Activated CD4-positive, alpha-beta T cell treated with anti-CD3 and anti-CD28 coated beads for 36 hours (primary cell): ENCODE measurements at regions of chr4 and their contacts with region 1.

Region 1: GRCh38 chr4:6327041-6327917 is 57.6 kb downstream of the WFS1 start:
- DNase-seq: peak; percentile 88
- ATAC-seq: peak; percentile 90
- H3K4me3 Mint-ChIP-seq: no peak overlapping the region
- H3K27ac Mint-ChIP-seq: no peak overlapping the region
- H3K4me1 Mint-ChIP-seq: no peaks in the 10 kb centered on the region
- H3K27me3 Mint-ChIP-seq: peaks cover 14% of the 10 kb centered on the region

Region 2: DNA sequence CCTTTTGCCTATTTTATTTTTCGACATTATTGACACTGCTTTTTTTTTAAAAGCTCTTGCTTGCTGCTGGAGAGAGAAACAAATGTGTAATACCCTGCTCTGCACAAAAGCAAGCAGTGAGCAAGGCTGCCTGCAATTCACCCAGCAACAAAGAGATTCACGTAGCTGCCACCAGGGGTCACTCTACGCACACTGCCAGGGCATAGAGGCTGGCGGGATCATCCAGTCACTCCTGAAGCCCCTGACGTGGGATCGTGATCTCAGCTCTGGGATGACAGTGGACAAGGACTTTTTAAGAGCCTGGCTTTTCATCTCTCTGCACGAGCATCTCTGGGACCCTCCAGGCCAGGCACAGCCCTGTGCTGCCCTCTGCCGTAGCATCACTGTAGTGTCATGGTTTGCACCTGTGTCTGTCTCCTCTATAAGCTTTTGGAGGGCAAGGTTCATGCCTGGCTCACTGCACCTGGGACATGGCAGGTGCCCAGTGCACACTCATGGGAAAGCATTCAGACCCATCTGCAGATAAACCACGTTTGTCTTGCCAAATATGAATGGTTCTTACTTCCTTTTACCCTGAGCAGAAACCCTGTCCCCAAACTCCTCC is 328.8 kb before region 1 on chr4:
- CTCF ChIA-PET with region 1: interaction called, 5 read pairs
- POLR2A ChIA-PET with region 1: no interaction called
- intact Hi-C with region 1: loop called (anchors 1 to 2 kb)
- DNase-seq: peak; percentile 66
- ATAC-seq: peak; percentile 44
- H3K4me3 Mint-ChIP-seq: no peak overlapping the region
- H3K27ac Mint-ChIP-seq: no peak overlapping the region
- H3K4me1 Mint-ChIP-seq: peaks cover 2% of the 10 kb centered on the region
- H3K27me3 Mint-ChIP-seq: peaks cover 13% of the 10 kb centered on the region

Region 3: DNA sequence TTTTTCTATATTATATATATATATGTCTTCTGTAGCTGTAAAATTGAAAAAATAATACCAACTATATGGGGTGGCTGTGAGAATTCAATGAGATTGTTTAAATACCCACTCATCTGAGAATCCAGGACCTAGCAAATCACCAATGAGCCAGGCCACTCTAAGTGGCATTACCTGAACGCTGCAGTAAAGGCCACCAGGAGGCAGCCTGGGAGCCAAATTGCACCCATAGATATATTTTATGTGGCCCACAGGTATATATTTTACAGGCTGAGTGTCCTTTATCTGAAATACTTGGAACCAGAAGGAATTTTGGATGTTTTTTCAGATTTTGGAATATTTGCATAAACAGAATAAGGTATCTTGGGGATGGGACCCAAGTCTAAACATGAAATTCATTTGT is 250.9 kb before region 1 on chr4:
- CTCF ChIA-PET with region 1: no interaction called
- POLR2A ChIA-PET with region 1: no interaction called
- intact Hi-C with region 1: loop called in 1 of 2 experiments (anchors 5 kb)
- DNase-seq: peak; percentile 25
- ATAC-seq: no peak
- H3K4me3 Mint-ChIP-seq: no peak overlapping the region
- H3K27ac Mint-ChIP-seq: no peak overlapping the region
- H3K4me1 Mint-ChIP-seq: no peaks in the 10 kb centered on the region
- H3K27me3 Mint-ChIP-seq: no peaks in the 10 kb centered on the region

Region 4: DNA sequence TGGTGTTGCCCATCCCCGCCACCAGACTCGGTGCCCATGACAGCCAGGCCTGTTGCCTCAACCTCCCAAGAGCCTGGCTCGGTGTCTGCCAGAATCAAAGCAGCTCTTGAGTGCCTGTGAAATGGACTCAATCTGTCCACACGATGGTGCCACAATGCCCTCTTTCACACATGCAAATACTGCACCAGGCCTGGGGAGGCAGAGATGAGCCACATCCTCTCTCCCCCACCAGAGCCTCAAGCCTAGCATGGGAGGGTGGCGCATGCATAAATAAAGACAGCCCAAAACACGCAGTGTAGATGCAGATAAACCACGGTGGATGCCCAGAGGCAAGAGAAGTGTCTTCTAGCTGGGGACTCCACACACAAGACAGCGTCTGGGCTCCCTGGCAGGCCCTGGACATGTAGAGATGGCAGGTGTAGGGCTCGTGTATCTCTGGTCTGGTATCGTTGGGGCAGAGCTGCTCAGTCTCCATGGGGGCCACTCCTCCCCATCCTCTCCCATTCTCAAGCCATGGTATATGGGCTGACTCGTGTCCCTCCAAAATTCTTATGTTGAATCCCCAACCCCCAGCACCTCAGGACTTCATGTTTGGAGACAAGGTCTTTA is 192.6 kb before region 1 on chr4:
- CTCF ChIA-PET with region 1: no interaction called
- POLR2A ChIA-PET with region 1: interaction called, 3 read pairs
- intact Hi-C with region 1: loop called in 1 of 2 experiments (anchors 5 kb)
- DNase-seq: peak; percentile 54
- ATAC-seq: peak; percentile 90
- H3K4me3 Mint-ChIP-seq: no peak overlapping the region
- H3K27ac Mint-ChIP-seq: no peak overlapping the region
- H3K4me1 Mint-ChIP-seq: no peaks in the 10 kb centered on the region
- H3K27me3 Mint-ChIP-seq: no peaks in the 10 kb centered on the region

Region 5: DNA sequence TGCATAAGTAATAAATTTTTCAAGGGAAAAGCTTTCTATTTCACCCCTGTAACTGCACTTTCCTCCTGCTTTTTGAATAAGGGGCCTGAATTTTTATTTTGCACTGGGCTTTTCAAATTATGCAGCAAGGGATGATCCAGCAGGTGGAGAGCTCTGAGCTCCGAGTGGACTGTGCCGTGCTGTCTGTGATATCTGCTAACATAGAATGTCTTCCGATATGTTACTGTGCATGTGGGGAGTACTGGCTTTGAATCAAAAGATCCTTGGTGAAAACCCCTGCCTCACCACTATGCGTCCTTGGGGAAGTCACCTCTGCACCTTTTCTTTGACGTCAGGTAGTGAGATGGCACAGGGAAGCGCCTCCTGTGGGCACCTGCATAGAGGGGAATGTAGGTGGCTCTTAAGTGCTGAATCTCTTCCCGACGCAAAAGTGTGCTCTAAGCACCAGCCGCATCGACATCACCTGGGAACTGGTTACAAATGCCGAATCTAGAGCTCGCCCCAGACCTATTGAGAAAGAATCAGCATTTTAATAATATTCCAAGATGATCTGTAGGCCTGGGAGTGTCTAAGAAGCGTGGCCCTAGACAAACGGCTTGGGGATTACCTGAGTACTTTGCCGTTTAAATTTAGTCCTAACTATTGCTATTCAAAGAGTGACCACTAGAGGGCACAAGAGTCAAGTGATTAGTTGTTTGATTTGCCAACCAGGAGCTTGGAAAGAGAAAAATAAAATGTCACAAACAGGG is 76.9 kb before region 1 on chr4:
- CTCF ChIA-PET with region 1: interaction called, 157 read pairs
- POLR2A ChIA-PET with region 1: no interaction called
- intact Hi-C with region 1: loop called (anchors 1 kb)
- DNase-seq: no peak
- ATAC-seq: peak; percentile 47
- H3K4me3 Mint-ChIP-seq: no peak overlapping the region
- H3K27ac Mint-ChIP-seq: no peak overlapping the region
- H3K4me1 Mint-ChIP-seq: no peaks in the 10 kb centered on the region
- H3K27me3 Mint-ChIP-seq: peaks cover 30% of the 10 kb centered on the region

Region 6: GRCh38 chr4:6264225-6264540 is 63.1 kb before region 1 on chr4:
- CTCF ChIA-PET with region 1: interaction called, 7 read pairs
- POLR2A ChIA-PET with region 1: interaction called, 3 read pairs
- intact Hi-C with region 1: loop called (anchors 1 to 5 kb)
- DNase-seq: peak; percentile 59
- ATAC-seq: peak; percentile 64
- H3K4me3 Mint-ChIP-seq: no peak overlapping the region
- H3K27ac Mint-ChIP-seq: no peak overlapping the region
- H3K4me1 Mint-ChIP-seq: peaks cover 8% of the 10 kb centered on the region
- H3K27me3 Mint-ChIP-seq: peaks cover 15% of the 10 kb centered on the region

Region 7: DNA sequence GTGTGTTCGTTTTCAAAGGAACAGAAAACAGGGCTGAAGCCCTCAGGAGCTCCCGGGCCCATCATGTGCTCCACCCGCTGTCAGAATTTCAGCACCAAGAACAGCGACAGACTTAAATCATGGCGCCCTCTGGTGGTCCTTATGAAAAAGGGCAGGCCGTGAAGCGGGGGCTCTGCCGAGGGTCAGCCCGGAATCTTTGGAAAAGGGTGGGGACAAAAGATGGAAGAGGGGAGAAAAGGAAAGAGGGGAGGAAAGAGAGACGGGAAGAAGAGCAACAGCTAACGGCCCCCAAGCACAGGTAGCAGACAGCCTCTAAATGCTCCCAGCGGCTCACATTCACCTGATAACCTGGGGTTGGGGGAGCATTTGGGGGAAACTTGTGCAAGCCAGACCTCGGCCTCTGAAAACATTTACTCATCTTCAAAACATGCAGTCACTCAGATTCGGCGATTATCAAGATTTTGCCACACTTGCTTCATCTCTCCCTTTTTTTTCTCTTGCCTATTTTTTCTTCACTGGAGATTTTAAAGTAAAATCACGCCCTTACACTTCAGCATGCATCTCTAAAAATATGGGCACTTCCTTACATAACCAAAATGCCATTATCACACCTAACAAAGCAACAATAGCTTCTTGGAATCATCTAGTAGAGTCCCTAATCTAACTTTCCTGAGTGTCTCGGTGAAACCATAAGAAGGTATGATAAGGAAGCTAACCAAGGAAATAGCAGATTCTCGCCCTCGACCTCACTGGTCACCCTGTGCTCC is 219.6 kb after region 1 on chr4:
- CTCF ChIA-PET with region 1: interaction called, 3 read pairs
- POLR2A ChIA-PET with region 1: no interaction called
- intact Hi-C with region 1: loop called in 1 of 2 experiments (anchors 1 kb)
- DNase-seq: peak; percentile 67
- ATAC-seq: peak; percentile 60
- H3K4me3 Mint-ChIP-seq: no peak overlapping the region
- H3K27ac Mint-ChIP-seq: no peak overlapping the region
- H3K4me1 Mint-ChIP-seq: no peaks in the 10 kb centered on the region
- H3K27me3 Mint-ChIP-seq: peaks cover 24% of the 10 kb centered on the region

Region 8: GRCh38 chr4:6673660-6674499 is 346.6 kb after region 1 on chr4:
- CTCF ChIA-PET with region 1: no interaction called
- POLR2A ChIA-PET with region 1: no interaction called
- intact Hi-C with region 1: no loop called
- DNase-seq: peak; percentile 96
- ATAC-seq: peak; percentile 77
- H3K4me3 Mint-ChIP-seq: peak overlapping the region; percentile 93
- H3K27ac Mint-ChIP-seq: peak overlapping the region; percentile 99
- H3K4me1 Mint-ChIP-seq: peaks cover 40% of the 10 kb centered on the region
- H3K27me3 Mint-ChIP-seq: no peaks in the 10 kb centered on the region

Region 9: GRCh38 chr4:6815029-6815836 is 488.0 kb after region 1 on chr4:
- CTCF ChIA-PET with region 1: no interaction called
- POLR2A ChIA-PET with region 1: no interaction called
- intact Hi-C with region 1: no loop called
- DNase-seq: no peak
- ATAC-seq: peak; percentile 58
- H3K4me3 Mint-ChIP-seq: no peak overlapping the region
- H3K27ac Mint-ChIP-seq: no peak overlapping the region
- H3K4me1 Mint-ChIP-seq: peaks cover 8% of the 10 kb centered on the region
- H3K27me3 Mint-ChIP-seq: no peaks in the 10 kb centered on the region